AG04450 (cell line): ENCODE measurements at regions of chr12 and their contacts with region 1.

Region 1: DNA sequence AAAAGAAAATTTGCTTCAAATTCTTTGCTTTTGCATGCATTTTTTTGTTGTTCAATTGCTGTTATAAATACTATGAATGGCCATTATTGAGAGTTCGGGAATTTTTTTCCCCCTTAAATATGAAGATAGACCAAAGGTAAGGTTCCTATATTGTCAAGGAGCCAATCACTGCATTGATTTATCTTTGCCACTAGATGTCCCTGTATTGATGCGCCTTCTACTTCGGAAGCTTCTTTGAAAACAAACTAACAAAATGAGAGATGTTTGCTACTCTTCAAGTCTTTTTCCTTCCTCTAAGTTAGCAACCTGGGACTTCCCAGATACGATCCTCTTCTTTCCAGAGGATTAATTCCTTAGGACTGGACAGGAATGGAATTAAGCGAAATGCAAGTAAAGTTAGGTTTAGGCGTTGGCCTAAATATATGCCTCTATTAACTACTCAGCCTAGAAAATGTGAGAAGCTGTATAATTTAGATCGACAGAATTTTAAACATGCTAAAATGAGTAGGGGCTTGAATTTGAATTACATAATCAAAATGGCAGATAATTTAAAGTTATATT is 318.1 kb downstream of the AEBP2 start:
- DNase-seq: no peak
- H3K4me3 ChIP-seq: no peak overlapping the region
- H3K27ac ChIP-seq: no peak overlapping the region
- H3K27me3 ChIP-seq: no peaks in the 10 kb centered on the region
- CTCF ChIP-seq: peak; percentile 75

Region 2: GRCh38 chr12:19369691-19370148 is 387.7 kb before region 1 on chr12:
- CTCF ChIA-PET with region 1: no interaction called
- POLR2A ChIA-PET with region 1: no interaction called
- DNase-seq: peak; percentile 43
- H3K4me3 ChIP-seq: no peak overlapping the region
- H3K27ac ChIP-seq: peak overlapping the region; percentile 65
- H3K27me3 ChIP-seq: no peaks in the 10 kb centered on the region
- CTCF ChIP-seq: no peak

Region 3: DNA sequence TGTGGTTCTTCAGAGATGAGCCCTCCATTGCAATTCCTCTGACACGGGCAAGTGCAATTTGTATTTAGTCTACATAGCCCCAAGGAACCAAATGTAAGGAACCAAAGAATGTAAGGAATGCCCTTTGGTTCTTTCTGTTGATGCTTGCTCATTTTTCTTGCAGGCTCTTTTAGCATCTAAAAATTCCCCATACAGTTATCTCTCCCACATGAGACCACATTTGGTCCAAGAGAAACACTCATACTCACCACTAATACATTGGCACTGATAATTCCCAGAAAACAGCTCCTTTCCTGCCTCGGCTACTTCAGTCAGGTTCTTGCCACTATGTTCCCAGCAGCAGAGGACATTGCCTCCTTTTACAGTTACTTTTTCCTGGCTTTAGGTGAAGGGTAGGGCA is 14.5 kb after region 1 on chr12:
- CTCF ChIA-PET with region 1: interaction called, 12 read pairs
- POLR2A ChIA-PET with region 1: no interaction called
- DNase-seq: peak; percentile 36
- H3K4me3 ChIP-seq: no peak overlapping the region
- H3K27ac ChIP-seq: no peak overlapping the region
- H3K27me3 ChIP-seq: no peaks in the 10 kb centered on the region
- CTCF ChIP-seq: no peak

Region 4: DNA sequence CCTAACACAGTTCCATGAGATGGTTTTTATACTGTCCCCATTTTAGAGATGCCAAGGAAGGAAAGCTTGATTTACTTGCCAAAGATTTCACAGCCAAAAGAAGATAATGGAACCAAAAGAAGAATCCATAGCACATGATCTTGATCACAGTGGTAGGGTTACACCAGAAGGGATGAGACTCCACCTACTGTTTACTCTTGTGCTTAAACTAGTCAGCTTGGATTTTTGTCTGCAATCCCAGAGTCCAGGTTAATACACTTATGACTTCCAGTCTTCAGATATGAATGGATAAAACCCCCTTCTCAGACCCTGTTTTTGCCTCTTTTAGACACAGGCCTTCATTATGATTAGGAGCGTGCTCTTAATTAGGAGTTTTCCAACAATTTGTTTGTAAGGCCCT is 136.1 kb after region 1 on chr12:
- CTCF ChIA-PET with region 1: interaction called, 27 read pairs
- POLR2A ChIA-PET with region 1: no interaction called
- DNase-seq: peak; percentile 7
- H3K4me3 ChIP-seq: no peak overlapping the region
- H3K27ac ChIP-seq: no peak overlapping the region
- H3K27me3 ChIP-seq: no peaks in the 10 kb centered on the region
- CTCF ChIP-seq: peak; percentile 35